Activated T-helper 2 cell treated with anti-CD3 and anti-CD28 coated beads, Interferon-gamma antibody, Interleukin-2, Interleukin-4, amounts not matched to agents 10 μg/mL and 5 μg/mL and 100 μg/mL, durations not matched to agents 14 hours and 24 hours and 36 hours (primary cell): ENCODE measurements at regions of chr7 and their contacts with region 1.

Region 1: GRCh38 chr7:121329191-121330052 is 622 bp downstream of the WNT16 start:
- DNase-seq: no peak
- H3K4me3 Mint-ChIP-seq: peak overlapping the region; percentile 38
- H3K27ac Mint-ChIP-seq: no peak overlapping the region
- H3K4me1 Mint-ChIP-seq: peaks cover 11% of the 10 kb centered on the region
- H3K27me3 Mint-ChIP-seq: peaks cover 64% of the 10 kb centered on the region

Region 2: DNA sequence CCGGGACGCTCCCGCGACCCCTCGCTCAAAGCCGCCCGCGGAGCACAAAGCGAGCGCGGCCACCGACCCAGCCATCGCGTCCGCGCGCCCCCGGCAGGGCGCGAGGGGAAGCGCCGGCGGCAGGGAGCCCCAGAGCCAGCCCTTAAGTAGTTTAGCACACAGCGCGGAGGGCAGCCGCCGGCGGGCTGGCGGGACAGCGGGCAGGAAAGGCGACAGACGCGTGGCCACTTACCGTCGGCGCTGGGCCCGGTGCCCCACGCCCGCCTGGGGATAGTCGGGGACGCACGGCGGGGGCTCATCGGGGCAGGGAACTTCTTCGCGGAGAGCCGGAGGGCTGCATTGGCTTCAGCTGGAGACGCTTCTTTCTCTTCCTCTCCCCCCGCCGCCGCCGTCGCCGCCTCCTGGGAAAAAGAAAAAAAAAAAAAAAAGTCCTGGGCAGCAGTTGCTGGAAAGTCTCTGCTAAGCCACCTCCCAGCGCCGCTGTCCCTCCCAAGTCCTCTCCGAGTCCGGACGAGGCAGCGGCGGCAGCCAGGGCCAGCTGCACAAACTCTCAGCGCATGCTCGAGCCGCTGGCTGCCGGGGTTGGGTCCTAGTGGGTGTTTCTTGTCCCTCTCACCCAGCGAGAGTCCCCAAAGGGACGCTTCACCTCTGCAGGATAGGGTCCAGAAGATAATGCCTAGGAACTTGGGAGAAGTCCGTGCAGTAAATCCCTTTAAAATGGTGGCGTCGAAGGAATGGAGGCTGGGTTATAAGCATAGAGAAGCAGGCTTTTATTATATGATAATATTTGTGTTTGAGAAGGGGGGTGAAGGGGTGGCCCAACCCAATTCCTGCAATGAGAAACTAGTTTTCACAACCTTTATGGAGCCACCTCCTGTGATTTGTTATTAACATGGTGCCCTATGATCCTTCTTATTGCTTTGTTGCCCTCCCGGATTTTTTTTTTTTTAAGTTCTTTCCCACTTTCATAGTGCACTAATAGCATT is 471.5 kb before region 1 on chr7 and contains the start of gene TSPAN12:
- intact Hi-C with region 1: no loop called
- DNase-seq: peak; percentile 40
- H3K4me3 Mint-ChIP-seq: peak within 1 kb of the TSS; percentile 83
- H3K27ac Mint-ChIP-seq: no peak within 1 kb of the TSS
- H3K4me1 Mint-ChIP-seq: peaks cover 10% of the 10 kb centered on the region
- H3K27me3 Mint-ChIP-seq: peaks cover 64% of the 10 kb centered on the region
- total RNA-seq, gene TSPAN12: not detected in 2 replicates

Region 3: GRCh38 chr7:121138262-121138933 is 191.0 kb before region 1 on chr7:
- intact Hi-C with region 1: loop called (anchors 10 kb)
- DNase-seq: no peak
- H3K4me3 Mint-ChIP-seq: no peak overlapping the region
- H3K27ac Mint-ChIP-seq: no peak overlapping the region
- H3K4me1 Mint-ChIP-seq: peaks cover 21% of the 10 kb centered on the region
- H3K27me3 Mint-ChIP-seq: peaks cover 5% of the 10 kb centered on the region